ENCODE measurements at regions of chr19 and their contacts with region 1.

Region 1: GRCh38 chr19:33828266-33829075 is 31.8 kb downstream of the KCTD15 start:
- DNase-seq: no peak
- ATAC-seq: peak; percentile 57
- H3K4me3 ChIP-seq: no peak overlapping the region
- H3K27ac ChIP-seq: no peak overlapping the region
- H3K4me1 ChIP-seq: no peaks in the 10 kb centered on the region
- H3K27me3 ChIP-seq: no peaks in the 10 kb centered on the region; the same call in 1 of the 2 replicates
- CTCF ChIP-seq: no peak

Region 2: DNA sequence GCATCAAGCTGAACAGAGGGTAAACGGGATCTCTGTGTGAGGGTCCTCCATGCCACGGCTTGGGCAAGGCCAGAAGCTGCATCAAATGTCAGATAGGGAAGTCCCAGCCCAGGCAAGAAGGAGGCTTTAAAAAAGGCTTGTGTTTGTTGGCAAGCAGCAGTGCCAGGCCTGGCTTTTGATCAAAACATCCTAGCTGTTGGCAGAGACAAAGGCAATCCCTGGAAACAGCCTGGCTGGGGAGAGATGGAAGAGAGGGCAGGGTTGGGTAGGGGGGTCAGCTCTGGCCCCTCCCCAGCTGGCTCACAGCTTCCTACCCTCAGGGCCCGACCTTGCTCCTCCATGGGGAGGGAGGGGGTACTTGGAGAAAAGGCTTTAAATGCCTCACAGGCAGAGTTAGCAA is 93.6 kb before region 1 on chr19:
- CTCF ChIA-PET with region 1: no interaction called
- POLR2A ChIA-PET with region 1: no interaction called
- in situ Hi-C with region 1: no loop called
- intact Hi-C with region 1: no loop called
- DNase-seq: no peak
- ATAC-seq: no peak
- H3K4me3 ChIP-seq: no peak overlapping the region
- H3K27ac ChIP-seq: no peak overlapping the region
- H3K4me1 ChIP-seq: no peaks in the 10 kb centered on the region
- H3K27me3 ChIP-seq: peaks cover 52% of the 10 kb centered on the region
- CTCF ChIP-seq: no peak

Region 3: DNA sequence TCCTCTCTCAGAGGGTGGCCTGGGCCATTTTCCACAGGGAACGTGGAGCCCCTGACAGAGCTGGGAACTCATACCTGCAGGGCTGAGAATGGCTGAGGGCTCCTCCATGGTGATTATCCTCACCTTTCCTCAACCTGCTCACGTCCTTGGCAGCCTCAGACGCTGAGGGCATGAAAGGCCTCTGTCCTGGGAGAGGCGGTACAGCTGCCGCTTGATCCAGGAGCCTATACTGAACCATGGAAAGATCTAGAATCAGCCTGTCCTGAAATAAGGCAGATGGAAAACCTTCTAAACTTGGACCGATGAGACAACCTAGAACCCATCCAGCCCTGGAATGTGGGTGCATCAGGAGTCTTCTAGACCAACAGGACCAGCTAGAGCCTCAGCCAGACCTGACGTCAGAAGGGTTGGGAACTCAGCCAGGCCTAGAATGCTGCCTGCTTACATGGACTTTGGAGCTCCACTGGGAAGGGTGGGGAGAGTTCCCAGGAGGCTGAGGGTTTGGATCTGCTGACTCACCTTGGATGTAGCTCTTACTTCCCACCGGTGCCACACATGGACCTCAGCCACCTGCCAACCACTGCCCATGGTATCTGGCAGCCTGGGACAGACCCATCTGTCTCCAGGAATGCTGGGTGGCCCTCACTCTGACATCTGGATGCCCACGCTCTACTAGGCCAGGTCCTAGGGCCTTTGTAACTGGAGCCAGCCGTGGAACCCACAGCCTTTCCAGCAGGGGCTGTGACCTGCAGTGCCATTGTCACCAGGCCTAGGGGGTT is 24.3 kb before region 1 on chr19:
- CTCF ChIA-PET with region 1: no interaction called
- POLR2A ChIA-PET with region 1: no interaction called
- in situ Hi-C with region 1: no loop called
- intact Hi-C with region 1: no loop called
- DNase-seq: no peak
- ATAC-seq: no peak
- H3K4me3 ChIP-seq: no peak overlapping the region
- H3K27ac ChIP-seq: no peak overlapping the region
- H3K4me1 ChIP-seq: no peaks in the 10 kb centered on the region
- H3K27me3 ChIP-seq: no peaks in the 10 kb centered on the region
- CTCF ChIP-seq: no peak

Region 4: GRCh38 chr19:33849551-33850147 is 21.2 kb after region 1 on chr19:
- CTCF ChIA-PET with region 1: no interaction called
- POLR2A ChIA-PET with region 1: no interaction called
- in situ Hi-C with region 1: no loop called
- intact Hi-C with region 1: no loop called
- DNase-seq: no peak
- ATAC-seq: no peak
- H3K4me3 ChIP-seq: no peak overlapping the region
- H3K27ac ChIP-seq: no peak overlapping the region
- H3K4me1 ChIP-seq: no peaks in the 10 kb centered on the region
- H3K27me3 ChIP-seq: peaks cover 2% of the 10 kb centered on the region; the same call in 1 of the 2 replicates
- CTCF ChIP-seq: no peak

Region 5: DNA sequence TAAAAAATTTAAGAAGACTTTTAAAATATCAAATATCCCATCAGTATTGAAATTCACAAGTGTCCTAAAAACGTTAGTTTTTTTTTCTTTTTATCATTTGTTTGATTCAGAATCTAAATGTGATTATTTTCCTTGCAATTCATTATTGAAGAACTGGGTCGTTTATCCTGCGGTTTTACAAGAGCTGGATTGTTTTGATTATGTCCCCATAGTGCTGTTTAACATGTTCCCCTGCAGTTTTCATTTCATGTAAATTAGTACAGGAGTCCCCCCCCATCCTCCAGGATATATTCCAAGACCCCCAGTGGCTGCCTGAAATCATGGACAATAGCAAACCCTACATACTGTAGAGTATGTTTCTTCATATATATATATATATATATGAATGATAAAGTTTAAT is 73.9 kb after region 1 on chr19:
- CTCF ChIA-PET with region 1: no interaction called
- POLR2A ChIA-PET with region 1: interaction called, 10 read pairs
- in situ Hi-C with region 1: no loop called
- intact Hi-C with region 1: no loop called
- DNase-seq: no peak
- ATAC-seq: no peak
- H3K4me3 ChIP-seq: no peak overlapping the region
- H3K27ac ChIP-seq: no peak overlapping the region
- H3K4me1 ChIP-seq: peaks cover 15% of the 10 kb centered on the region; the same call in 1 of the 2 replicates
- H3K27me3 ChIP-seq: peaks cover 3% of the 10 kb centered on the region; the same call in 1 of the 2 replicates
- CTCF ChIP-seq: no peak

Region 6: DNA sequence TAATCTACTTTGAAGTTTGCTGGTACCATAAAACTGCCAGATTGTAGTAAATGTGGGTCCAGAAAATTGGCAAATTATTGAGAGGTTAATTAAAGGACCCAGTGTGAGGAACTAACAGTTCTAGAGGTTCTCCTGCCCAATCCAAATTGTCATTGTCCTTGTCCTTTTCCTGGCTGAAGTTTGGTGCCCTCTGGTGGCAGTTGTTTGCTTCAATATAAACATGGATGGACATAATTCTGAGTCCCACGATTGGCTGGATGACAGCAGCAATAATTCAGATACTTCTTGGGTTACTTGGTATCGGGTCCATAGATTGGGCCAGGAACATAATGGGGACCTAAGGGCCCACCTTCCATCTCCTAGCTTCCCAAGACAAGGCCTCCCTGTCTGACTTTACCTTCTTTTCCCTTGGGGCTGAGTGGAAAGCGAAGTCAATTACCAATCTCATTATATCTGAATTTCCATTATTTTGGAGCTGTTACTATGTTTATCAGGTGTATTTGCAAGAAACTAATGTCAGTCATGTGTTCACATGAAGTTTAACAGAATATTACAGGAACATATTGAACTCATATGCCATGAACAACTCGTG is 392.1 kb after region 1 on chr19:
- CTCF ChIA-PET with region 1: no interaction called
- POLR2A ChIA-PET with region 1: interaction called, 15 read pairs
- in situ Hi-C with region 1: no loop called
- intact Hi-C with region 1: no loop called
- DNase-seq: no peak
- ATAC-seq: peak; percentile 68; the same call in 1 of the 2 replicates
- H3K4me3 ChIP-seq: no peak overlapping the region
- H3K27ac ChIP-seq: no peak overlapping the region
- H3K4me1 ChIP-seq: peaks cover 25% of the 10 kb centered on the region
- H3K27me3 ChIP-seq: no peaks in the 10 kb centered on the region
- CTCF ChIP-seq: peak; percentile 95

Measured in Panc1 (cell line).